ENCODE measurements at regions of chr7 and their contacts with region 1.

Region 1: GRCh38 chr7:139359366-139360209 is at the start of gene LUC7L2:
- DNase-seq: peak; percentile 100
- ATAC-seq: peak; percentile 99
- H3K4me3 ChIP-seq: peak within 1 kb of the TSS; percentile 70 to 98
- H3K27ac ChIP-seq: peak within 1 kb of the TSS; percentile 85 to 98
- H3K4me1 ChIP-seq: no peaks in the 10 kb centered on the region
- H3K27me3 ChIP-seq: no peaks in the 10 kb centered on the region
- total RNA-seq, gene LUC7L2: 103 to 121 TPM

Region 2: GRCh38 chr7:139340037-139340807 is 19.4 kb before region 1 on chr7:
- intact Hi-C with region 1: loop called (anchors 1 to 2 kb)
- DNase-seq: peak; percentile 98 to 99
- ATAC-seq: peak; percentile 94
- H3K4me3 ChIP-seq: peak overlapping the region; percentile 58 to 63
- H3K27ac ChIP-seq: peak overlapping the region; percentile 87 to 95
- H3K4me1 ChIP-seq: no peaks in the 10 kb centered on the region
- H3K27me3 ChIP-seq: no peaks in the 10 kb centered on the region

Region 3: DNA sequence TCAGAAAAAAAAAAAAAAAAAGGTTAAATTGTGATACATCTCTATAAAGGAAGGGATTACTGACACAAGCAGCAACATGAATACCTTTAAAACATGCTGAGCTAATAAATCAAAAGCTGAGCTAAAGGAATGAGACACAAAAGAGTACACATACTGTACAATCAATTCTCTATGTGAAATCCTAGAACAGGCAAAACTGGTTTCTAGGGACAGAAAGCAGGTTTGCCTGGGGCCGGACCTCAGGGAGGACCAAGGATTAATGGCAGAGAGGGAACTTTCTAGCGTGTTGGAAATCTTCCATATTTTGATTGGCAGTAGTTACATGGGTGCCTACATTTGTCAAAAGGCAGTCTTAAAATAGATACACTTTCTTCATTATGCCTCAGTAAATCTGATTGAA is 71.4 kb after region 1 on chr7:
- intact Hi-C with region 1: loop called in 1 of 2 experiments (anchors 5 kb)
- DNase-seq: no peak
- ATAC-seq: peak; percentile 39
- H3K4me3 ChIP-seq: no peak overlapping the region
- H3K27ac ChIP-seq: peak overlapping the region in 1 of 2 donors; percentile 60
- H3K4me1 ChIP-seq: peaks cover 0 to 12% of the 10 kb centered on the region in 2 donors
- H3K27me3 ChIP-seq: no peaks in the 10 kb centered on the region